Activated B cell treated with CpG ODN at 0.5 μM for 24 hours (primary cell): ENCODE measurements at regions of chr14 and their contacts with region 1.

Region 1: GRCh38 chr14:23006544-23007419 is 3.2 kb downstream of the C14orf93 start:
- DNase-seq: peak; percentile 90
- ATAC-seq: peak; percentile 92
- H3K4me3 Mint-ChIP-seq: peak overlapping the region; percentile 94
- H3K27ac Mint-ChIP-seq: peak overlapping the region; percentile 97
- H3K4me1 Mint-ChIP-seq: peaks cover 47% of the 10 kb centered on the region
- H3K27me3 Mint-ChIP-seq: no peaks in the 10 kb centered on the region
- CTCF ChIP-seq: no peak

Region 2: DNA sequence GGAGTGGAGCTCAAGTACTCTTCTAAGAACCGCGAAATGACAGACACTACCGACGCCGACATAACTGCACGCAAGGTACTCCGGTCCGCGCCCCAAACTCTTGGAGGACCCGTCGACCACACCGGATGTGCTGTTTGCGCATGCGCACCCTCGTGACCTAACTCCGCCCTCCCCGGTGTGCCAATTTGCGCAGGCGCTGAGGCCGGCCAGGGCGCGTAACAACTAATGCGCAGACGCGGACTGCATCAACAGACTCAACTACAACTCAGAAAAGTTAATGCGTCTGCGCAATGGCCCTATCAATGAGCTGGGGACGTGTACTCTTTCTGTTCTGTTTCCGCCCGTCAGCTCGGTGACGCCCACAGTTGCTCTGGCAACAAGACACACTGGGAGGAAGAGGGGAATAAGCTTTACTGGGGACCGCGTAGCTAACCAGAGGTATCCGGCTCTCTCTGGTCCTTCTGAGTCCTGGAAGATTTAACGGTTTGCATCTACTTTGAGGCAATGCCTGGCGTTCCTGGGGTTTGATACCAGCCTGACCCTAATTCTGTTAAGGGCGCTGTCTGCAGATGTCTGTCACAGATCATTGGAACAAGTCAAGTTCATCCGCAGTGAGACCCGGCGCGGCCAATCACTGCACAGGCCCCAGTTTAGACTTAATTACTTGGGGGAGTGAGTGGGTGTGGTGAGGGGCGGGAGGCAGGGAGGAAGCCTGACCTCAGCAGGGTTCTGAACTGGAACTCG is 417.5 kb before region 1 on chr14 and contains the start of gene DAD1:
- CTCF ChIA-PET with region 1: no interaction called
- POLR2A ChIA-PET with region 1: interaction called, 10 read pairs
- intact Hi-C with region 1: loop called (anchors 2 kb)
- DNase-seq: peak; percentile 99
- ATAC-seq: peak; percentile 88
- H3K4me3 Mint-ChIP-seq: peak within 1 kb of the TSS; percentile 99
- H3K27ac Mint-ChIP-seq: peak within 1 kb of the TSS; percentile 100
- H3K4me1 Mint-ChIP-seq: peaks cover 57% of the 10 kb centered on the region
- H3K27me3 Mint-ChIP-seq: peaks cover 2% of the 10 kb centered on the region
- CTCF ChIP-seq: no peak
- total RNA-seq, gene DAD1: 123 and 139 TPM in 2 replicates

Region 3: GRCh38 chr14:22929104-22929847 is 77.5 kb before region 1 on chr14 and contains the start of gene PRMT5:
- CTCF ChIA-PET with region 1: interaction called, 3 read pairs
- POLR2A ChIA-PET with region 1: interaction called, 13 read pairs
- intact Hi-C with region 1: loop called (anchors 1 kb)
- DNase-seq: peak; percentile 83
- ATAC-seq: peak; percentile 93
- H3K4me3 Mint-ChIP-seq: no peak within 1 kb of the TSS
- H3K27ac Mint-ChIP-seq: no peak within 1 kb of the TSS
- H3K4me1 Mint-ChIP-seq: peaks cover 14% of the 10 kb centered on the region
- H3K27me3 Mint-ChIP-seq: no peaks in the 10 kb centered on the region
- CTCF ChIP-seq: no peak
- total RNA-seq, gene PRMT5: 75.3 and 96.5 TPM in 2 replicates

Region 4: GRCh38 chr14:22994762-22995275 is 12.0 kb before region 1 on chr14:
- CTCF ChIA-PET with region 1: interaction called, 48 read pairs
- POLR2A ChIA-PET with region 1: interaction called, 25 read pairs
- intact Hi-C with region 1: no loop called
- DNase-seq: no peak
- ATAC-seq: peak; percentile 73
- H3K4me3 Mint-ChIP-seq: no peak overlapping the region
- H3K27ac Mint-ChIP-seq: no peak overlapping the region
- H3K4me1 Mint-ChIP-seq: peaks cover 3% of the 10 kb centered on the region
- H3K27me3 Mint-ChIP-seq: no peaks in the 10 kb centered on the region
- CTCF ChIP-seq: no peak

Region 5: DNA sequence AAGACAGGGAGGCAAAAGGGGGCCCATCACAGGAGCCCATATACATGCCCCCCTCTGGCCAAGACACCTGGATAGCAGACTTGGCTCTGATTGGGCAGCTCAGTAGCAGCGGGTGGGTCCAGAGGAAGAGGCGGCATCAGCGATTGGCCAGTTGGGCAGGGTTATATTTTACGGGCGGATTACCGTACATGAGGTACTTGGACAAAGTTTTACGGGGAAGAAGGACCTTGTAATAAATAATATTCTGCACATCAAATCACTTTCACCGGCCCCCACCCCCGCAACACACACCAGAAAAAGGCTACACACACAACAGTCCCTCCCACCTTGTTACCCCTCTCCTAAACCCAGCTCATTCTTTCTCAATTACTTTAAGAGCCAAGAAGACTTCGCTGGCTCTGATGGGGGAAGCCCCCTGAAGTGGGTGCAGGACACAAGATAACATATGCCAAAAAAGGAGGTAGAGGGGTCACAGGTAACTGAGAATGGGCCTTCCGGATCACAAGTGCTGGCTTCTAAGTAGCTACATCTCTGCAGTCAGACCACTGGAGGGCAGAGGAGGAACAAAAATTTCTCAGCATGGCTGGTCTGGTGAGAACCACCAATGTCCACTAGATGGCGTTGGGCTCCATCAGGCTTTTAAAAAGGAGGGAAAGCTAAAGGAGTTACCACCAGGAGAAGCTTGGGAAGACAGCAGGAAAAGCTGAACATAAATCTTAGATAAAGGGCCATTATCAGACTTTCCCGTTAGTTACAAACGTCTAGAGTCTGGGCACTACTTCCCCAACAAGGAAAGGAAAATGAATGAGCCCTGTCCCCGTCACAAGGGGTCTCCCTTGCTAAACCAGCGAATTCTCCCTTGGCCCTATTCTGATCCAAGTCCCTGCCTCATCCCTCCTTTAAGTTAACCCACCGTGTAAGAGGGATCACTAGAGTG is 62.0 kb after region 1 on chr14:
- CTCF ChIA-PET with region 1: interaction called, 12 read pairs
- POLR2A ChIA-PET with region 1: interaction called, 7 read pairs
- intact Hi-C with region 1: no loop called
- DNase-seq: no peak
- ATAC-seq: peak; percentile 85
- H3K4me3 Mint-ChIP-seq: peak overlapping the region; percentile 22
- H3K27ac Mint-ChIP-seq: peak overlapping the region; percentile 50
- H3K4me1 Mint-ChIP-seq: peaks cover 36% of the 10 kb centered on the region
- H3K27me3 Mint-ChIP-seq: no peaks in the 10 kb centered on the region
- CTCF ChIP-seq: peak; percentile 79

Region 6: DNA sequence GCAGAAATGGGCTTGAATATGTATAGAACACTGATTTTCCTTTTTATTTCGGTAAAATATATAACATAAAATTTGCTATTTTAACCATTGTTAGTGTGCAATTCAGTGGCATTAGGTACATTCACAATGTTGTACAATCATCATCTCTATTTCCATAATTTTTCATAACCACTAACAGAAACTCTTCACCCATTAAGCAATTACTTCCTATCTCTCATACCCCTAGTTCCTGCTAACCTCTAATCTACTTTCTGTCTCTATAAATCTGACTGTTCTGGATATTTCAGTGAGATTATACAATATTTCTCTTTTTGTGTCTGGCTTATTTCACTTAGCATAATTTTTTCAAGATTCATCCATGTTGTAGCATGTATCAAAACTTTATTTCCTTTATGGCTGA is 222.0 kb after region 1 on chr14:
- CTCF ChIA-PET with region 1: no interaction called
- POLR2A ChIA-PET with region 1: no interaction called
- intact Hi-C with region 1: no loop called
- DNase-seq: no peak
- ATAC-seq: no peak
- H3K4me3 Mint-ChIP-seq: no peak overlapping the region
- H3K27ac Mint-ChIP-seq: no peak overlapping the region
- H3K4me1 Mint-ChIP-seq: peaks cover 3% of the 10 kb centered on the region
- H3K27me3 Mint-ChIP-seq: peaks cover 11% of the 10 kb centered on the region
- CTCF ChIP-seq: no peak